ENCODE measurements at regions of chr13 and their contacts with region 1.

Region 1: DNA sequence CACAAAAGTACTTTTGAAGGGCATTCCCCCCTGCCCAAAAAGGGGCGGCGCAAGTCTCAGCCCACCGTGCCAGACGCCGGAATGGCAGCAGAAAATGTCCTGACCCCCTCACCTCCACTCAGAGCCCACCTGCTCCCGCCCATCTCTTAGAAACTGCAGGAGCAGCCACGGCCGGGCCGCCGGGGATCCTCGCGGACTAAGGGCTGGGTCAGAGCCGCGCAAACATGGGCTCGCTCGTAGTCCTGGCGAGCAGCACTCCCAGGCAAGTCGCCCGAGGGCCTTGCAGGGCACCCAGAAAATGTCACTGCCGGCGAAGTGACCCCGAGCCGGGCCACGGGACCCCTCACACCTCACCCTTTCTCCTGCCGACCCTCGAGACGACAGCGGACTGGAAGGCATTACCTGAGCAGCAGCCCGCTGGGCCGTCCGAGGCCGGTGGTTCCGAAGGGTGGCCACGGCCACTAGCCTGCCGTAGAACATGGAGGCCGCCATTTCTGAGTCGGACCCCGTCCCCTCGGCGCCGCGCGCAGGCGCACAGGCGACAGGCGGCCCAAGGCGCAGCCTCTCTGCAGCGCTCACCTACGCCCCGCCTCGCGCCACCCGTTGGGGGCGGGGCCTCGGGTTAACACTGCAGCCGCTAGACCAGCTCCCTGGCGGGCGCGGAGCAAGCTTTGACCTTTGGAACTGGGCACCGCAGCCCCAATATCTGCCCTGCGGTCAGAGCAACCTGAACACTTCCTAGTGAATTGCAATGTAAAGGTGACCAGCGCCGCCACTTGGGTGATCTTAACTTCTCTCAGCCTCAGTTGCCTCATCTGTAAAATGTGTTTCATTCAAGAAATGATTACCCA is at the start of gene SUCLA2:
- DNase-seq: peak; percentile 92
- ATAC-seq: peak; percentile 99
- H3K4me3 ChIP-seq: peak within 1 kb of the TSS; percentile 89 to 94 (median 90)
- H3K27ac ChIP-seq: peak within 1 kb of the TSS; percentile 79
- H3K4me1 ChIP-seq: peaks cover 36% of the 10 kb centered on the region
- H3K27me3 ChIP-seq: no peaks in the 10 kb centered on the region
- CTCF ChIP-seq: peak; percentile 52
- EP300 ChIP-seq: no peak
- POLR2A ChIP-seq: peak; percentile 66 to 93
- RAD21 ChIP-seq: peak; percentile 28; the same call in 1 of the 2 replicates
- total RNA-seq, gene SUCLA2: 77.1 and 121 TPM in 2 replicates

Region 2: GRCh38 chr13:48037346-48038173 is 36.6 kb after region 1 on chr13 and contains the start of gene NUDT15:
- CTCF ChIA-PET with region 1: interaction called, 4 read pairs
- POLR2A ChIA-PET with region 1: interaction called, 17 read pairs
- in situ Hi-C with region 1: no loop called
- intact Hi-C with region 1: loop called (anchors 5 kb)
- DNase-seq: peak; percentile 92
- ATAC-seq: peak; percentile 96
- H3K4me3 ChIP-seq: peak within 1 kb of the TSS; percentile 70 to 80 (median 72)
- H3K27ac ChIP-seq: peak within 1 kb of the TSS; percentile 94
- H3K4me1 ChIP-seq: peaks cover 33% of the 10 kb centered on the region
- H3K27me3 ChIP-seq: no peaks in the 10 kb centered on the region; a peak in 1 of 5 replicates
- CTCF ChIP-seq: peak; percentile 100
- EP300 ChIP-seq: peak in 1 of 2 experiments; percentile 3; a peak in 1 of 4 replicates
- POLR2A ChIP-seq: peak; percentile 93 to 99
- RAD21 ChIP-seq: peak; percentile 82
- total RNA-seq, gene NUDT15: 47.3 and 69.9 TPM in 2 replicates

Measured in HepG2 (cell line).